ENCODE measurements at regions of chr18 and their contacts with region 1.

Region 1: DNA sequence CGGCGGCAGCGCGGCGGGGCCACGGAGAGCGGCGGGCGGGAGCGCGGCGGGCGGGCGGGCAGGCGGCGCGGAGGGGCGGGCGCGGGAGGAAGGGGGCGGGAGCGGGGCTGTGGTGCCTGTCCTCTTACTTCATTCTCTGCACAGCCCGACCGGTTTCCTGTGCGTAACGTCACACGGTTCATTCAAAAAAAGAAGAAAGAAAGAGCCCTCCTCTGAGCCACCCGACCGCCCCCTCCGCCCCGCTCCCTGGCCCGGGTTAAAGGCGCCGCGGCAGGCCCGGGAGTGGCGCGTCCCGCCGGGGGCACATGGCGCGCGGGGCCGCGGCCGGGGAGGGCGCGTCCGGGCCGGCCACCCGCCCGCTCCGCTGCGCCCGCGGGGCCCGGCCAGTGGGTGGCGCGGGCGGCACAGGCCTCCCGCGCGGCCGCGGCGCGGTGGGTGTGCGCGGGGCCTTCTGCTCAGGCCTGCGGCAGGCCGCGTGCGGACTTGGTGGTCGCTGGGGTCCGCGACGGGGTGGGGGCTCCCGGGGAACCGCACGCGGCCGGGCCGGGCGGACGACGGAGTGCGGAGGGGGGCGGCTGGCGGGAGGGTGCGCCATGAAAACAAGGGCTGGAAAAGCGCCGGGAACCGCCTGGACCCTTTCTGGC is 599 bp upstream of the BCL2 start:
- DNase-seq: peak; percentile 73 to 95 (median 88)
- ATAC-seq: peak; percentile 80
- H3K4me3 ChIP-seq: peak overlapping the region; percentile 53 to 56
- H3K4me3 Mint-ChIP-seq: peak overlapping the region; percentile 88
- H3K27ac ChIP-seq: peak overlapping the region in 1 of 2 experiments; percentile 29
- H3K27ac Mint-ChIP-seq: peak overlapping the region; percentile 94
- H3K4me1 ChIP-seq: peaks cover 16% of the 10 kb centered on the region
- H3K4me1 Mint-ChIP-seq: peaks cover 42% of the 10 kb centered on the region
- H3K27me3 ChIP-seq: no peaks in the 10 kb centered on the region
- H3K27me3 Mint-ChIP-seq: no peaks in the 10 kb centered on the region
- CTCF ChIP-seq: no peak

Region 2: DNA sequence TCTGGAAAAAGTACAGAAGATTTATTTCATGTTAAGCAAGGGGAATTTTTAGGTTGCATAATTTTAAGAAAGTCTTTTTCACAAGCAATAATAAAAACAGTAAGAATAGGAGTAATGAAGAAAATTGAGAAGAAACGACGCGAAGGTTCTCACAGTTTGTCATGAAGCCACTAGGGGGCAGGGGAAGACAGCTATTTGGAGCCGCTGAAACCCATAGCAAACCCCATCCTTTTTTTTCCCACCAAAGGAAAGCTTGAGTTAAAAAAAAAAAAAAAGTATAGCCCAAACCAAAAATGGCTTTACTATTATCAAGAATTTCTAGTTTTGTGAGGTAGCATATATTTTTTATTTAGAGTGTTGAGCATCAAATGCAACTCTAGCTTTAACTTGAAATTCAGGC is 303.9 kb before region 1 on chr18:
- CTCF ChIA-PET with region 1: interaction called, 144 read pairs
- POLR2A ChIA-PET with region 1: no interaction called
- intact Hi-C with region 1: loop called in 1 of 2 experiments (anchors 1 kb)
- DNase-seq: peak; percentile 11 to 79 (median 51)
- ATAC-seq: peak; percentile 77
- H3K4me3 ChIP-seq: no peak overlapping the region
- H3K4me3 Mint-ChIP-seq: no peak overlapping the region
- H3K27ac ChIP-seq: no peak overlapping the region
- H3K27ac Mint-ChIP-seq: no peak overlapping the region
- H3K4me1 ChIP-seq: no peaks in the 10 kb centered on the region
- H3K4me1 Mint-ChIP-seq: no peaks in the 10 kb centered on the region
- H3K27me3 ChIP-seq: no peaks in the 10 kb centered on the region
- H3K27me3 Mint-ChIP-seq: peaks cover 16% of the 10 kb centered on the region
- CTCF ChIP-seq: peak; percentile 90

Region 3: DNA sequence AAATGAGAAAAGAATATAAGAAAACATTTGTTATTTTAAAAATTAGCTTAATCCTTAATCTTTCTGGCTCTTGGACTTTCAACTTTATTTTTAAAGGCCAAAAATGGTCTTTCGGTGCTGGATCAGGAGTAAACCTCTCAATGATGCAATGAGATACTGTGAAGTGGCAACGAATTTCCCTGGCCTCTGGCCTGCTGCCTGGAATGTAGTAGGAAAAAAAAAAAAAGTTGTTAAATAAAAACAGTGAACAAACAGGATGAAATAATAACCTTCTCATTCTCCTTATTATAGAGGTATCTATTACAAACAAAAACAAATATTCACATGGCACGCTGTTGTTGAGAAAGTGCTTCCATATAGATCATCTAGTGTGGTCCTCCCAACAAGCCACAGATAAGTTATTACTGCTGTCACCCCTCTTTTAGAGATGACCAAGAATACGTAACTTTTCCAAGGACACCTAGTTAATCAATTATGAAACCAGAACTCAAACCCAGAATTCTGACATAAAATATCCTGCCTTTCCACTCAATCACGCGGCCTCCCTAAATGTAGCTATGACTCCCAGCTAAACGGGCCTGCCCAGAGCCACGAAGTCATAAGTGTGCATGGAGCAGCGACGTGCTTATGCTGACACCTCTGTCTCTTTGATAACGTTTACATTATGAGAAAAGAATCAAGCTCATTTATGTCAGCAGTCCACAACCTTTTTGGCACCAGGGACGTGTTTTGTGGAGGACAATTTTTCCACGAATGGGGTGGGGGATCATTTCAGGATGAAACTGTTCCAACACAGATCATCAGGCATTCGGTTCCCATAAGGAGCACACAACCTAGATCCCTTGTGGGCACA is 171.5 kb before region 1 on chr18:
- CTCF ChIA-PET with region 1: interaction called, 70 read pairs
- POLR2A ChIA-PET with region 1: interaction called, 23 read pairs
- intact Hi-C with region 1: loop called in 1 of 2 experiments (anchors 2 kb)
- DNase-seq: no peak
- ATAC-seq: no peak
- H3K4me3 ChIP-seq: no peak overlapping the region
- H3K4me3 Mint-ChIP-seq: no peak overlapping the region
- H3K27ac ChIP-seq: no peak overlapping the region
- H3K27ac Mint-ChIP-seq: no peak overlapping the region
- H3K4me1 ChIP-seq: peaks cover 28% of the 10 kb centered on the region
- H3K4me1 Mint-ChIP-seq: peaks cover 51% of the 10 kb centered on the region
- H3K27me3 ChIP-seq: no peaks in the 10 kb centered on the region
- H3K27me3 Mint-ChIP-seq: no peaks in the 10 kb centered on the region
- CTCF ChIP-seq: no peak

Region 4: GRCh38 chr18:63207143-63207790 is 112.9 kb before region 1 on chr18:
- CTCF ChIA-PET with region 1: interaction called, 22 read pairs
- POLR2A ChIA-PET with region 1: interaction called, 5 read pairs
- intact Hi-C with region 1: no loop called
- DNase-seq: peak in 2 of 9 experiments; percentile 21 to 31
- ATAC-seq: peak; percentile 50
- H3K4me3 ChIP-seq: peak overlapping the region; percentile 13 to 50
- H3K4me3 Mint-ChIP-seq: peak overlapping the region; percentile 79
- H3K27ac ChIP-seq: peak overlapping the region; percentile 36
- H3K27ac Mint-ChIP-seq: peak overlapping the region; percentile 92
- H3K4me1 ChIP-seq: peaks cover 98% of the 10 kb centered on the region
- H3K4me1 Mint-ChIP-seq: peaks cover 93% of the 10 kb centered on the region
- H3K27me3 ChIP-seq: no peaks in the 10 kb centered on the region
- H3K27me3 Mint-ChIP-seq: no peaks in the 10 kb centered on the region
- CTCF ChIP-seq: no peak

Region 5: GRCh38 chr18:63253428-63254372 is 66.5 kb before region 1 on chr18:
- CTCF ChIA-PET with region 1: interaction called, 11 read pairs
- POLR2A ChIA-PET with region 1: interaction called, 3 read pairs
- intact Hi-C with region 1: loop called in 1 of 2 experiments (anchors 5 kb)
- DNase-seq: no peak
- ATAC-seq: no peak
- H3K4me3 ChIP-seq: no peak overlapping the region
- H3K4me3 Mint-ChIP-seq: no peak overlapping the region
- H3K27ac ChIP-seq: no peak overlapping the region
- H3K27ac Mint-ChIP-seq: peak overlapping the region; percentile 50
- H3K4me1 ChIP-seq: peaks cover 36% of the 10 kb centered on the region
- H3K4me1 Mint-ChIP-seq: peaks cover 61% of the 10 kb centered on the region
- H3K27me3 ChIP-seq: no peaks in the 10 kb centered on the region
- H3K27me3 Mint-ChIP-seq: no peaks in the 10 kb centered on the region
- CTCF ChIP-seq: no peak

Region 6: DNA sequence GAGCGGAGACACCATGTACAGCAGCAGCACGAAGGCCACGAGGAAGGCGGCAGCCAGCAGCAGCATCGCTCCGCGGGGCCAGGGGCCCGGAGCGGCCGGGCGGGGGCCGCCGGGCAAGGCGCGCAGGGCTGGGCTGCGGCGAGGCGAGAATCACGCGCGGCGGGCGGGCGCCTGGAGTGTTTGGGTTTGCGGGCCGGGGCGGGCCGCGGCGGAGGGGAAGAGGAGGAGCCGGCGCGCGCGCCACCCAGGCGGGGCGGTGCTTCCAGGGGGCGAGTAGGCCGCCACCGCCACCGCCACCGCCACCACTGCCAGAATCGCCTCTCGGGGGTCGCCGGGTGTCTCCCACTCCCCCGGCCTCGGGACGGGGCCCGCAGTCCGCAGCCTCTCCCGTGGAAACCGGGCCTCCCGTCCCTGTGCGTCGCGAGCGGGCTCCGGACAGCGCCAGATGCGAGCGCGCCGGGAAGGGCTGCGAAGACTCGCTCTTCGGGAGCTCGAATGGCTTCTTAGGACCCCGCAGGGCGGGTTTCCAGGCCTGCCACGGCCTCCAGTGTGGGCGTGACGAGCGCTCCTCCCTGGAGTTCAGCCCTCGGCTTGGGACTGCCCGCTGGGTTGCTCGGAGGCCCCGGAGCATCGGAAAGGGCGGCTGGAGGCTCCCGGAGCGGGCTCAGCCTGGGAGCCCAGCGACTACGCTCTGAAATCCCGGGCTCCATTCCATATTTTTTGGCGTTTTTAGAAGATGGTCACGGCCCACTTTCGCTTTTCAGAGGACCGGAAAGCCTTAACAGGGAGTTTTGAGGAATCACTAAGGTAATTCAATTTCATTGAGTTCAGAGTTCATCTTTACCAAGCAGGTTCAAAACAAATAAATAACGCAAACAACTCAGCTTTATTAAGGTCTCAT is 47.1 kb after region 1 on chr18 and contains the start of gene KDSR:
- CTCF ChIA-PET with region 1: interaction called, 3 read pairs
- POLR2A ChIA-PET with region 1: no interaction called
- intact Hi-C with region 1: loop called in 1 of 2 experiments (anchors 2 kb)
- DNase-seq: peak; percentile 58 to 87 (median 78)
- ATAC-seq: peak; percentile 82
- H3K4me3 ChIP-seq: peak within 1 kb of the TSS; percentile 87 to 89
- H3K4me3 Mint-ChIP-seq: peak within 1 kb of the TSS; percentile 89
- H3K27ac ChIP-seq: peak within 1 kb of the TSS; percentile 63 to 65
- H3K27ac Mint-ChIP-seq: peak within 1 kb of the TSS; percentile 86
- H3K4me1 ChIP-seq: peaks cover 33% of the 10 kb centered on the region
- H3K4me1 Mint-ChIP-seq: peaks cover 45% of the 10 kb centered on the region
- H3K27me3 ChIP-seq: no peaks in the 10 kb centered on the region
- H3K27me3 Mint-ChIP-seq: no peaks in the 10 kb centered on the region
- CTCF ChIP-seq: no peak
- total RNA-seq, gene KDSR: 12.8 to 13.9 TPM

Measured in CD8-positive, alpha-beta T cell (primary cell).